ENCODE measurements at regions of chr6 and their contacts with region 1.

Region 1: GRCh38 chr6:141677598-141678211 is 455.0 kb upstream of the GJE1 start:
- DNase-seq: no peak
- ATAC-seq: no peak

Region 2: GRCh38 chr6:142112451-142113061 is 434.9 kb after region 1 on chr6:
- intact Hi-C with region 1: loop called (anchors 2 kb)
- DNase-seq: peak; percentile 46
- ATAC-seq: no peak

Measured in Right ventricle myocardium inferior (tissue), 1 donor.